ENCODE measurements at regions of chr19 and their contacts with region 1.

Region 1: DNA sequence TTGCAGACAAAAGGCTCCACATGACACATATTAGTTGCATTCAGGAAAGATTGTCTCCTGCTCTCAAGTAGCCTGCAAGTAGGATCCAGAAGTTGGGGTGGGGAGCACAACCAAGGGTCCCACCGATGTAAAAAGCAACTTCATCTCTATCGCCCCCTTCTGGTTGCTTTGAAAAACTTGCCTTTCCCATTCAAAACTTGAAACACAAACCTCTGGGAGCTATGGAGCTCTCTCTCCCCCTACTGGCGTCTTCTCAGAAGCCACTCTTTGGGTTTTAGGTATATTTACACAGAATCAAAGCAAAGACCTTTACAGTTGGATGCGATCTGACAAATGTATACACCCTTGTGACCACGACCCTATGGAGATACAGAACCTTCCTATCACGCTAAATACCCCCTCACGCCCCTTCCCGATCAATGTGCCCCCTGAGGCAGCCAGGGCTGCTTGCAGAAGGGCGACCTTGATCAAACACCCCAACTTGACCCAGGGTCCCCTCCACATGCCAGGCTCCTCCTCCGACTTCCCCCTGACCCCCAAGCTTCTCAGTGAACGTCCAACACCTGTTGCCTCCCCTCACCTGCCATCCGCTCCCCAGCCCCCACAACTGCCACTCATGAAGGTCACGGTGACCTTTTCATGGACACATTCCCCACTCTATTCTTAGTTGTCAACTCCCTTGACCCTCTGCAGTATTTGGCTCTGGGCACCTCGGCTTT is 10.1 kb downstream of the NOSIP start:
- DNase-seq: peak; percentile 82 to 85 (median 84)
- H3K4me3 ChIP-seq: no peak overlapping the region
- H3K4me3 Mint-ChIP-seq: peak overlapping the region; percentile 68 to 91 (median 78)
- H3K27ac ChIP-seq: no peak overlapping the region
- H3K27ac Mint-ChIP-seq: peak overlapping the region; percentile 90 to 98 (median 95)
- H3K4me1 ChIP-seq: peaks cover 64% of the 10 kb centered on the region
- H3K4me1 Mint-ChIP-seq: peaks cover 34 to 64% (median 47%) of the 10 kb centered on the region in 4 donors
- H3K27me3 ChIP-seq: no peaks in the 10 kb centered on the region
- H3K27me3 Mint-ChIP-seq: no peaks in the 10 kb centered on the region

Region 2: DNA sequence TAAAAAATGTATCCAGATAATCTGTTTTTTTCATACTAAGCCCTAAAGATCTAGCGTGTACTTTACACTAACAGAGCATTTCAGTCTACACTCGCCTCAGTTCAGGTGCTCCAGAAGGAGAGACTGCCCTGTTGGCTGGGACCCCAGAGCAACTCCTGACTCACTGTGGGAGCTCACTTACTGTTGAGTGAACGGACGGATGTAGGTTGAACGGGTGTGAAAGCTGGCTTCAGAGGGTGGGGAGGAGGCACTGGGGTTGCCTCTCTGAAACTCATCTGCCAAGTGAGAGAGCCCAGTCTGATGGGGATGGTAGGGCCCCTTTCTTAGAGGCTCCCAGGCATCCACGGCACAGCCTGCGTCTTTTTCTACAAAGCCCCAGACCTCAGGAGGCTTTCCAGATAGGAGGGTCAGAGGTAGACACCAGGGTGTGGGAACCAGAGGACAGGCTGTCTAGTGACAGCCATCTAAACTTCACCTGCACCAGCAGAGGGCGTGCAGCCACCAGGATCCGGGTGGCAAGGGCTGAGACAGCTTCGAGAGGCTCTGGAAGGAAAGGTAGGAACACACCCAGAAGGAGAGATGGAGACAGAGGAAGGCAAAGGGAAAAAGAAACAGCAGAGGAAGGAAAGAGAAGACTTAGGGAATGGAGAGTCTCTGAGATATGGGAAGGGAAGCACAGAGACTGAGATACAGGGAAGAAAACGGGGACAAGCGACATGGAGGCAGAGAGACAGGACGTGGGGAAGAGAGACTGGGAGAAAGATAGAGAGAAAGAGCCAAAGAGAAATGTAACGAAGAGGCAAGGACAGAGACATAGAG is 178.5 kb before region 1 on chr19:
- CTCF ChIA-PET with region 1: no interaction called
- POLR2A ChIA-PET with region 1: no interaction called
- intact Hi-C with region 1: loop called (anchors 1 kb)
- DNase-seq: peak; percentile 76 to 80 (median 78)
- H3K4me3 ChIP-seq: no peak overlapping the region
- H3K4me3 Mint-ChIP-seq: no peak overlapping the region
- H3K27ac ChIP-seq: no peak overlapping the region
- H3K27ac Mint-ChIP-seq: peak overlapping the region in 6 of 7 donors; percentile 9 to 85 (median 60)
- H3K4me1 ChIP-seq: peaks cover 21% of the 10 kb centered on the region
- H3K4me1 Mint-ChIP-seq: peaks cover 8 to 24% (median 11%) of the 10 kb centered on the region in 4 donors
- H3K27me3 ChIP-seq: no peaks in the 10 kb centered on the region
- H3K27me3 Mint-ChIP-seq: no peaks in the 10 kb centered on the region

Region 3: DNA sequence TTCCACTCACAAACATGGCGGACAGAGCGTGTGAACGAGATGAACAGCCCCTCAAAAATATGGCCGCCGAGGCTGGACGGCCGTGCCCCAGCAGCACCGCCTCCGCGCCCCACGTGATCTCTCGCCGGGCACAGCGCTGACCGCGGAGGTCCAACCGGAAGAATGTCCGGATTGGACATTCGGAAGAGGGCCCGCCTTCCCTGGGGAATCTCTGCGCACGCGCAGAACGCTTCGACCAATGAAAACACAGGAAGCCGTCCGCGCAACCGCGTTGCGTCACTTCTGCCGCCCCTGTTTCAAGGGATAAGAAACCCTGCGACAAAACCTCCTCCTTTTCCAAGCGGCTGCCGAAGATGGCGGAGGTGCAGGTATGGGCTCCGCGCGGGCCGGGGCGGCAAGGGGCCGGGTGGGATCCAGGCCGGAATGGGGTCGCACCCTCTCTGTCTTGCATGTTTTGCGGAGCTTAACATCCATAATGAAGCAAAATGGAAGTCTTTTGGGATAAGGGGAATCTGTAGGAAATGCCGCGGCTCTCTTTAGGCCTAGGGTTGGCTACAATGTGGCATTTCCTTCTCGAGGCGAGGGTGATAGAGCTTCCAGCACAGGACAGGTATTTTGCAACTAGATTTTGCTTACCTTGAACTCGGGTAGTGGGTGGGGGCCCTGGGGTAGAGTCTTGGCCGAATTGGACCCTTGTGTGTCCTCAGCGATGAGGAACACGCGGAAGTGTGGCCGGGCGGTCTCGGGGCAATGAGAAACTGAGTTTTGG is 82.8 kb before region 1 on chr19 and contains the start of gene RPL13A:
- CTCF ChIA-PET with region 1: interaction called, 3 read pairs
- POLR2A ChIA-PET with region 1: interaction called, 17 read pairs
- intact Hi-C with region 1: no loop called
- DNase-seq: peak; percentile 98 to 100 (median 100)
- H3K4me3 ChIP-seq: peak within 1 kb of the TSS; percentile 98 to 99
- H3K4me3 Mint-ChIP-seq: peak within 1 kb of the TSS; percentile 94 to 100 (median 98)
- H3K27ac ChIP-seq: peak within 1 kb of the TSS; percentile 85
- H3K27ac Mint-ChIP-seq: peak within 1 kb of the TSS; percentile 95 to 98 (median 98)
- H3K4me1 ChIP-seq: peaks cover 39% of the 10 kb centered on the region
- H3K4me1 Mint-ChIP-seq: peaks cover 18 to 55% (median 36%) of the 10 kb centered on the region in 4 donors
- H3K27me3 ChIP-seq: no peaks in the 10 kb centered on the region
- H3K27me3 Mint-ChIP-seq: no peaks in the 10 kb centered on the region
- total RNA-seq, gene RPL13A: 5,517 to 5,661 TPM

Region 4: GRCh38 chr19:49512970-49513745 is 57.1 kb before region 1 on chr19:
- CTCF ChIA-PET with region 1: interaction called, 26 read pairs
- POLR2A ChIA-PET with region 1: interaction called, 8 read pairs
- intact Hi-C with region 1: no loop called
- DNase-seq: no peak
- H3K4me3 ChIP-seq: peak overlapping the region; percentile 6 to 51
- H3K4me3 Mint-ChIP-seq: peak overlapping the region; percentile 82 to 94 (median 88)
- H3K27ac ChIP-seq: peak overlapping the region; percentile 55
- H3K27ac Mint-ChIP-seq: peak overlapping the region in 6 of 7 donors; percentile 21 to 97 (median 88)
- H3K4me1 ChIP-seq: peaks cover 32% of the 10 kb centered on the region
- H3K4me1 Mint-ChIP-seq: peaks cover 14 to 42% (median 25%) of the 10 kb centered on the region in 4 donors
- H3K27me3 ChIP-seq: no peaks in the 10 kb centered on the region
- H3K27me3 Mint-ChIP-seq: no peaks in the 10 kb centered on the region

Region 5: DNA sequence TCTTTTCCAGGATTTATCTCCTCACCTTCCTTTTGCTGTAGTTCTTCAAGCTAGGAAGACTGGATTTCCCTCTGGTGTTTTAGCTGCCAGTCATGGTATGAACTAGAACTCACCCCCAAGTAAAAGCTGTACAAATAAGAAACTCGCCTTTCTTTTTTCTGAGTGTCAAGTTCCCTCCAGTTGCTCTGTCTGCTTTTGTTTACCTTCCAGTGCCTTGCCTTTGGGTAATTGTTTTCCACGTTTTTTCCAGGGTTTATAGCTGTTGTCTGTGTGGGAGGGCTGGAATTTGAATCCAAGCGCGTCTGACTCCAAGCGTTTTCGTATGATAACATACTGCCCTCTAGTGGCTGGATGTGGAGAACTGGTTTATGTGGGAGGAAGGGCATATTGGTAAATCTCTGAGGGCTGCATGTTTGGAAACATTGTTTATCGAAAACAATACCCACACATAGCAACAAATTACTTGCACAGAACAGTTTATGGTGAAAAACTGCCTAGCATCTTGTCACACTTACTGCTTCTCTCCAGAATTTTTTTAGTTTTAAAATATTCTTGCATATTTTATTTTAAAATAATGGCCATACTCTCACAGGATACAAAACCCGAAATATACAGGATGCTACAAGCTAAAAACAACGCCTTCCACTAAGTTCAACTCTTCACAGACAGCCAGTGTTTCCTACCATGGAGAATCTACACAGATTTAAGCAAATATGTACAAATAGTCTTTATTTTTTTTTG is 23.3 kb before region 1 on chr19:
- CTCF ChIA-PET with region 1: interaction called, 299 read pairs
- POLR2A ChIA-PET with region 1: interaction called, 629 read pairs
- intact Hi-C with region 1: loop called (anchors 1 kb)
- DNase-seq: peak; percentile 70 to 81 (median 78)
- H3K4me3 ChIP-seq: peak overlapping the region; percentile 4 to 34
- H3K4me3 Mint-ChIP-seq: peak overlapping the region; percentile 43 to 91 (median 84)
- H3K27ac ChIP-seq: no peak overlapping the region
- H3K27ac Mint-ChIP-seq: peak overlapping the region; percentile 40 to 95 (median 90)
- H3K4me1 ChIP-seq: peaks cover 47% of the 10 kb centered on the region
- H3K4me1 Mint-ChIP-seq: peaks cover 27 to 61% (median 39%) of the 10 kb centered on the region in 4 donors
- H3K27me3 ChIP-seq: no peaks in the 10 kb centered on the region
- H3K27me3 Mint-ChIP-seq: no peaks in the 10 kb centered on the region

Region 6: GRCh38 chr19:49624967-49625910 is 54.9 kb after region 1 on chr19:
- CTCF ChIA-PET with region 1: no interaction called
- POLR2A ChIA-PET with region 1: no interaction called
- intact Hi-C with region 1: no loop called
- DNase-seq: no peak
- H3K4me3 ChIP-seq: no peak overlapping the region
- H3K4me3 Mint-ChIP-seq: no peak overlapping the region
- H3K27ac ChIP-seq: no peak overlapping the region
- H3K27ac Mint-ChIP-seq: peak overlapping the region in 1 of 7 donors; percentile 50
- H3K4me1 ChIP-seq: no peaks in the 10 kb centered on the region
- H3K4me1 Mint-ChIP-seq: peaks cover 0 to 4% (median under 1%) of the 10 kb centered on the region in 4 donors
- H3K27me3 ChIP-seq: no peaks in the 10 kb centered on the region
- H3K27me3 Mint-ChIP-seq: no peaks in the 10 kb centered on the region

Region 7: GRCh38 chr19:49640113-49640898 is 70.0 kb after region 1 on chr19 and contains the start of gene RRAS:
- CTCF ChIA-PET with region 1: interaction called, 6 read pairs
- POLR2A ChIA-PET with region 1: interaction called, 11 read pairs
- intact Hi-C with region 1: no loop called
- DNase-seq: peak; percentile 99 to 100 (median 100)
- H3K4me3 ChIP-seq: peak within 1 kb of the TSS; percentile 42 to 73
- H3K4me3 Mint-ChIP-seq: peak within 1 kb of the TSS; percentile 89 to 95 (median 92)
- H3K27ac ChIP-seq: peak within 1 kb of the TSS; percentile 97
- H3K27ac Mint-ChIP-seq: peak within 1 kb of the TSS; percentile 96 to 100 (median 99)
- H3K4me1 ChIP-seq: peaks cover 63% of the 10 kb centered on the region
- H3K4me1 Mint-ChIP-seq: peaks cover 44 to 73% (median 56%) of the 10 kb centered on the region in 4 donors
- H3K27me3 ChIP-seq: no peaks in the 10 kb centered on the region
- H3K27me3 Mint-ChIP-seq: no peaks in the 10 kb centered on the region
- total RNA-seq, gene RRAS: 12.0 to 13.4 TPM